MCF 10A (cell line): ENCODE measurements at regions of chr7 and their contacts with region 1.

Region 1: DNA sequence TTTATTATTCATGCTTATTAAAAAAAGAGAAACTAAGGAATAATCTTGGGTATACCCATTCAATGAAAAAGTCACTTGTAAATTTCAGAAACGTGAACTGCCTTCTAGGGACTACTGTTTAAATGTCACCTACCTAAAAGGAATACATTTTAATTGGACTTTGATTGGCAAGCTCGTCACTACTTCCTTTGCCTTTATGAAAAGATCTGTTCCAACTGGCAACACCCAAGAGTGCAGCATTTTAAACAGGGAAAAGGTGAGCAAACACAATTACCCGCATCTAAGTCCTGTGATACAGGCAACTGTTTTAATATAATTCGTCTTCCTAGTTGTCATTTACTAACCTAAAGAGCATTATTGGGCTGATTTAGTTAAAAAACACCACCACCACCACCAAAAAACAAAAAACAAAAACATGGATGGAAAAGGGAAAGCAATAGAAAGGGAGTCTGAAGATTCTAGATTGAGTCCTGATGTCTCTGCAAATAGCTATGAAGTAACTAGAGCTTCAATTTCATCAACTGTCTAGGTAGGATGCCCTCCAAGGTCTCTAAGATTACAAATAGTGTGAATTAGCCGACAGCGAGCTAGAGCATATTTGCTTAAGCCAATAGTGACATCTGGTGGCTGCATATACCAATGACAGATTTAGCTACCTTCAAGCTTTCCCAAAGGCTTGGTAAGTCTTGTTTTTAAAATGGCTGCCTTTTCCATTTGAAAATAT is 33.8 kb upstream of the ICA1 start:
- DNase-seq: peak; percentile 85
- H3K4me3 Mint-ChIP-seq: no peak overlapping the region
- H3K27ac Mint-ChIP-seq: no peak overlapping the region
- H3K4me1 Mint-ChIP-seq: peaks cover 7% of the 10 kb centered on the region
- H3K27me3 Mint-ChIP-seq: no peaks in the 10 kb centered on the region
- CTCF ChIP-seq: peak; percentile 65

Region 2: GRCh38 chr7:7424151-7424873 is 871.5 kb before region 1 on chr7:
- CTCF ChIA-PET with region 1: no interaction called
- POLR2A ChIA-PET with region 1: interaction called, 4 read pairs
- intact Hi-C with region 1: loop called (anchors 5 kb)
- DNase-seq: peak; percentile 85
- H3K4me3 Mint-ChIP-seq: peak overlapping the region; percentile 52
- H3K27ac Mint-ChIP-seq: no peak overlapping the region
- H3K4me1 Mint-ChIP-seq: peaks cover 20% of the 10 kb centered on the region
- H3K27me3 Mint-ChIP-seq: no peaks in the 10 kb centered on the region
- CTCF ChIP-seq: peak; percentile 89

Region 3: GRCh38 chr7:7595451-7595850 is 700.3 kb before region 1 on chr7:
- CTCF ChIA-PET with region 1: interaction called, 7 read pairs
- POLR2A ChIA-PET with region 1: no interaction called
- intact Hi-C with region 1: loop called (anchors 5 kb)
- DNase-seq: peak; percentile 26
- H3K4me3 Mint-ChIP-seq: no peak overlapping the region
- H3K27ac Mint-ChIP-seq: no peak overlapping the region
- H3K4me1 Mint-ChIP-seq: peaks cover 5% of the 10 kb centered on the region
- H3K27me3 Mint-ChIP-seq: no peaks in the 10 kb centered on the region
- CTCF ChIP-seq: peak; percentile 28

Region 4: GRCh38 chr7:7662527-7662926 is 633.3 kb before region 1 on chr7:
- CTCF ChIA-PET with region 1: no interaction called
- POLR2A ChIA-PET with region 1: no interaction called
- intact Hi-C with region 1: no loop called
- DNase-seq: peak; percentile 20
- H3K4me3 Mint-ChIP-seq: no peak overlapping the region
- H3K27ac Mint-ChIP-seq: no peak overlapping the region
- H3K4me1 Mint-ChIP-seq: no peaks in the 10 kb centered on the region
- H3K27me3 Mint-ChIP-seq: no peaks in the 10 kb centered on the region
- CTCF ChIP-seq: no peak

Region 5: DNA sequence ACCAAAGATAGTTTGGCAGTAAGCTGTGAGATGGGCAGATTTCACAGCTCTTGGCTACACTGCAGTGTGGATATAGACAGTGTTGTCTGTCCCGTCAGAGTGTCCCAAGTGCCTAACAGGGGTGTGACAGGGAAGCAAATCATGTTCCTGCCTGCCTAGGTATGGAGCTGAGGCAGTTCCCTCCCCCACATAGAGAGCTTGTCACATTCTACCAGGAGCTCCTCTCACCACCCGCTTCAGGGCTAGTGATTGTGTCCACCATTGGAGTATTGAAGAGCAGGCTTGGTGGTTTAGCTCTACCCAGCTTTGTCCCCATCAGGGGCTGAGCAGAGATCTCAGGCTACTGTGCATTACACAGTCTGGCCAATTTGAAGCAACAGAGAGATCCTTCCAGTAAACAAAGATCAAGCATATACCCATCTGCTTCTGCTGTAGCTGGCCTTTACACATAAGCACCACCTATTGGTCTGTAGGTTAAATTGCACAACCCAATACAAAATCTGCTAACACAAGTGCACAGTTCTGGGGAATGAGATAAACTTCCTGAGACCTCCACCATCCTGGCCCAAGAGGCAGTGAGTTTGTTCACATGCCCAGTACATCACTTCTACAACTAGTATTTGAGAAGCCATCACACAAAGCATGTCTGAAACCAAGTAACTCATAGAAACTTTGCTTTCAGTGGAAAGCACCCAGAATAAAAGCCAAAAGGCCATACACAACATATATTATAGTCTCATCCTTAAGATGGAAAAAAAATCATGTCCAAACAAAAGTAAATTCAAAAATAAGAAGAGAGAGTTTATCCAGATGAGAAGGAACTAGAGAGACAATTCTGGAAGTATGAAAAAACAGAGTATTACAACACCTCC is 259.9 kb before region 1 on chr7:
- CTCF ChIA-PET with region 1: interaction called, 7 read pairs
- POLR2A ChIA-PET with region 1: no interaction called
- intact Hi-C with region 1: loop called (anchors 5 kb)
- DNase-seq: peak; percentile 52
- H3K4me3 Mint-ChIP-seq: no peak overlapping the region
- H3K27ac Mint-ChIP-seq: no peak overlapping the region
- H3K4me1 Mint-ChIP-seq: no peaks in the 10 kb centered on the region
- H3K27me3 Mint-ChIP-seq: no peaks in the 10 kb centered on the region
- CTCF ChIP-seq: peak; percentile 50

Region 6: DNA sequence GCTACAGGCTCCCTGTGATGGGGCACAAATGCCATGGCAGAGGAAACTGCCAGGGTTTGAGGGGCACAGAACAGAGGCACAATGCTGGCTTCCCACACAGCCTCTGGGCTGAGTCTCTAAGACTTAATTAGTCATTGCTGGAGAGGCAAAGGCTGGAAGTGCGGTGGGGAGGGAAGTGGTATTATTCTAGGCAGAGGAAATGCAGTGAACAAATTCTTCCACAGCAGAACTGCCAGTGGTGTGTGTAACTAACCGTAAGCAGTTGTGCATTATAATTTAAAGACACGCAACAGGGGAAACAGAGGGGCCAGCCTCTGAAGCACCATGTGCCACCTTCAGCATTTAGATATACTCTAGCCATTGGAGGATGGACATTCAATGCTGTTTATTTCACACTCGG is 46.7 kb before region 1 on chr7:
- CTCF ChIA-PET with region 1: interaction called, 6 read pairs
- POLR2A ChIA-PET with region 1: no interaction called
- intact Hi-C with region 1: loop called (anchors 2 kb)
- DNase-seq: no peak
- H3K4me3 Mint-ChIP-seq: no peak overlapping the region
- H3K27ac Mint-ChIP-seq: no peak overlapping the region
- H3K4me1 Mint-ChIP-seq: no peaks in the 10 kb centered on the region
- H3K27me3 Mint-ChIP-seq: no peaks in the 10 kb centered on the region
- CTCF ChIP-seq: no peak

Region 7: DNA sequence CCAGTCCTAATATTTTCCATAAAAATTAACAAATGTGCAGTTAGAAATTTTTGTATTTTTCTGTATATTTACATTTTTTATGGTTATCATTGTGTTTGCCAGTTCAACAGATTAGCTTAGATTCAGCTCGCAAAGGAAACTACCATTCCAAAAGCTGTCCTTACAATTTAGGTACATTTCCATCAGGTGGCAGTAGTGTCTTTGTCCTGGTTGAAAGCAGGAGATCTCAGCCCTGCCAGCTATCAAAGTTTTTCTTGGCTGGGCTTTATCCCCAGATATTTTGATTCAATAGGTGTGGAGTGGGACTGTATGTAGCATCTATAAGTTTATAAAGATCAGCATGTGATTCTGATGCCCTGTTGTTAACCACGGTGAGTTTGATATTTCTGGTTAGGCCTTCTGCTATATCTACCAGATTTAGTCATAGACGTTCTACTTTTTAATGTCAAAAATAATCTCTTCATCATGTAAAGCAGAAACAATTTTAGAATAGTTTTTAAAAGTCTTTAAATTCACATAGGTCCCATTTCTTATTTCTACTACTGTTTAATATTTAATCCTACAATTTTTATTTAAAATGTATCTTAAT is 18.3 kb before region 1 on chr7:
- CTCF ChIA-PET with region 1: interaction called, 51 read pairs
- POLR2A ChIA-PET with region 1: interaction called, 7 read pairs
- intact Hi-C with region 1: no loop called
- DNase-seq: peak; percentile 51
- H3K4me3 Mint-ChIP-seq: no peak overlapping the region
- H3K27ac Mint-ChIP-seq: no peak overlapping the region
- H3K4me1 Mint-ChIP-seq: peaks cover 14% of the 10 kb centered on the region
- H3K27me3 Mint-ChIP-seq: no peaks in the 10 kb centered on the region
- CTCF ChIP-seq: peak; percentile 36

Region 8: GRCh38 chr7:8353991-8354390 is 58.2 kb after region 1 on chr7:
- CTCF ChIA-PET with region 1: no interaction called
- POLR2A ChIA-PET with region 1: no interaction called
- intact Hi-C with region 1: no loop called
- DNase-seq: no peak
- H3K4me3 Mint-ChIP-seq: no peak overlapping the region
- H3K27ac Mint-ChIP-seq: no peak overlapping the region
- H3K4me1 Mint-ChIP-seq: no peaks in the 10 kb centered on the region
- H3K27me3 Mint-ChIP-seq: peaks cover 13% of the 10 kb centered on the region
- CTCF ChIP-seq: no peak

Region 9: GRCh38 chr7:8465338-8465737 is 169.5 kb after region 1 on chr7:
- CTCF ChIA-PET with region 1: no interaction called
- POLR2A ChIA-PET with region 1: no interaction called
- intact Hi-C with region 1: no loop called
- DNase-seq: no peak
- H3K4me3 Mint-ChIP-seq: no peak overlapping the region
- H3K27ac Mint-ChIP-seq: no peak overlapping the region
- H3K4me1 Mint-ChIP-seq: no peaks in the 10 kb centered on the region
- H3K27me3 Mint-ChIP-seq: peaks cover 40% of the 10 kb centered on the region
- CTCF ChIP-seq: no peak